ENCODE measurements at regions of chr18 and their contacts with region 1.

Region 1: GRCh38 chr18:56638271-56639093 is at the start of gene TXNL1:
- DNase-seq: peak; percentile 96
- ATAC-seq: peak; percentile 98
- H3K4me3 Mint-ChIP-seq: peak within 1 kb of the TSS; percentile 95
- H3K27ac Mint-ChIP-seq: peak within 1 kb of the TSS; percentile 97
- H3K4me1 Mint-ChIP-seq: peaks cover 29% of the 10 kb centered on the region
- H3K27me3 Mint-ChIP-seq: no peaks in the 10 kb centered on the region
- total RNA-seq, gene TXNL1: 45.3 to 50.6 TPM

Region 2: GRCh38 chr18:56650944-56651770 is 12.7 kb after region 1 on chr18 and contains the start of gene WDR7:
- POLR2A ChIA-PET with region 1: interaction called, 58 read pairs
- DNase-seq: peak; percentile 90
- ATAC-seq: peak; percentile 91
- H3K4me3 Mint-ChIP-seq: peak within 1 kb of the TSS; percentile 90
- H3K27ac Mint-ChIP-seq: peak within 1 kb of the TSS; percentile 94
- H3K4me1 Mint-ChIP-seq: peaks cover 45% of the 10 kb centered on the region
- H3K27me3 Mint-ChIP-seq: no peaks in the 10 kb centered on the region
- total RNA-seq, gene WDR7: 42.8 to 43.1 TPM

Measured in activated naive CD8-positive, alpha-beta T cell treated with anti-CD3 and anti-CD28 coated beads, Interleukin-2, amount 10 ng/mL, durations not matched to agents 7 days and 5 days (primary cell).